ENCODE measurements at regions of chr1 and their contacts with region 1.

Region 1: DNA sequence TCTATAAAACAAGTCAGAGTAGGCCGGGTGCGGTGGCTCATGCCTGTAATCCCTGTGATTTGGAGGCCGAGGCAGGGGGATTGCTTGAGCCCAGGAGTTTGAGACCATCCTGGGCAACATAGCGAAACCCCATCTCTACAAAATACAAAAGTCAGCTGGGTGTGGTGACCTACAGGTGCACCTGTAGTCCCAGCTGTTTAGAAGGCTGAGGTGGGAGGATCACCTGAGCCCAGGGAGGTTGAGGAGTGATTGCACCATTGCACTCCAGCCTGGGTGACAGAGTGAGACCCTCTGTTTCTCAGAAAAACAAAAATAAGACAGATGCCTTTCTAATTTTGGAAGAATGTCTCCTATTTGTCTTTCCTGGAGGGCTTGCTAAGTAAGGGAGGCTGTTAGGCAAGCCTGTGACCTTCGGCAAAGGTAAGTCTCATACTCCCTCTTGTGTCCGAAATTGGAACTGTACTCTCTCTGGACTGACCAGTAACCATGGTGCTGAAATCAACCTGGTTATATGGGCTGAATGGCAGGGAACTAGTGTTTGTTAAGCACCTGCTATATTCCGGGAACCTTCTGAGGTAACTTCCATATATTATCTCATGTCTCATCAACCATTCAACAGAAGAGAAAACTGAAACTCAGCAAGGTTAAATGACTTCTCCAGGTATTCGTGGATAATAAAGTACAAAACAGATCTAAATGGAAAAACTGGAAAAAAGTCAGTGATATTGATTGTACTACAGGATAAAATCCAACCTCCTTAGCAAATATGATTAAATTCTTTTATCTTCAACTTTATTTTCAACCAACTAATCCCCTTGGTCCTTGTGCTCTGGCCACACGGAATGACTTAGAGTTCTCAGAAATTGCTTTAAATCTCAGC is 11.8 kb upstream of the RAB3B start:
- DNase-seq: peak; percentile 75
- H3K4me3 ChIP-seq: no peak overlapping the region
- H3K27ac ChIP-seq: no peak overlapping the region
- H3K4me1 ChIP-seq: peaks cover 11% of the 10 kb centered on the region
- H3K27me3 ChIP-seq: no peaks in the 10 kb centered on the region
- CTCF ChIP-seq: peak; percentile 92 to 97

Region 2: DNA sequence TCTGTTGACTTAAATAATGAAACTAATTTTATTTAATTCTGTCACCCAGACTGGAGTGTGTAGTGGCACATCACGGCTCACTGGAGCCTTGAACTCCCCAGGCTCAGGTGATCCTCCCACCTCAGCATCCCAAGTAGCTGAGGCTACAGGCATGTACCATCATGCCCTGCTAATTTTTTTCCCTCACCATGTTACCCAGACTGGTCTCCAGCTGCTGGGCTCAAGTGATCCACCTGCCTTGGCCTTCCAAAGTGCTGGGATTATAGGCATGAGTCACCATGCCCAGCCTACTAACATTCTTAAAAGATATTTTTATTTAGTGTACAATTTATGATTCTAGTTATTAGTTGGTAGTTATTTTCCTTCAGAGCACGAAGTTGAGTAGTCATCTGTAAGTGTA is 173.2 kb before region 1 on chr1:
- CTCF ChIA-PET with region 1: no interaction called
- dilution Hi-C with region 1: no loop called
- in situ Hi-C with region 1: no loop called
- intact Hi-C with region 1: loop called (anchors 1 kb)
- DNase-seq: peak; percentile 82
- H3K4me3 ChIP-seq: no peak overlapping the region
- H3K27ac ChIP-seq: no peak overlapping the region
- H3K4me1 ChIP-seq: peaks cover 10% of the 10 kb centered on the region
- H3K27me3 ChIP-seq: no peaks in the 10 kb centered on the region
- CTCF ChIP-seq: no peak

Region 3: GRCh38 chr1:51897699-51898031 is 104.6 kb before region 1 on chr1:
- CTCF ChIA-PET with region 1: no interaction called
- dilution Hi-C with region 1: no loop called
- in situ Hi-C with region 1: loop called in 1 of 2 experiments (anchors 5 kb)
- intact Hi-C with region 1: loop called (anchors 1 kb)
- DNase-seq: peak; percentile 81
- H3K4me3 ChIP-seq: no peak overlapping the region
- H3K27ac ChIP-seq: peak overlapping the region; percentile 71
- H3K4me1 ChIP-seq: peaks cover 27% of the 10 kb centered on the region
- H3K27me3 ChIP-seq: no peaks in the 10 kb centered on the region
- CTCF ChIP-seq: no peak

Region 4: DNA sequence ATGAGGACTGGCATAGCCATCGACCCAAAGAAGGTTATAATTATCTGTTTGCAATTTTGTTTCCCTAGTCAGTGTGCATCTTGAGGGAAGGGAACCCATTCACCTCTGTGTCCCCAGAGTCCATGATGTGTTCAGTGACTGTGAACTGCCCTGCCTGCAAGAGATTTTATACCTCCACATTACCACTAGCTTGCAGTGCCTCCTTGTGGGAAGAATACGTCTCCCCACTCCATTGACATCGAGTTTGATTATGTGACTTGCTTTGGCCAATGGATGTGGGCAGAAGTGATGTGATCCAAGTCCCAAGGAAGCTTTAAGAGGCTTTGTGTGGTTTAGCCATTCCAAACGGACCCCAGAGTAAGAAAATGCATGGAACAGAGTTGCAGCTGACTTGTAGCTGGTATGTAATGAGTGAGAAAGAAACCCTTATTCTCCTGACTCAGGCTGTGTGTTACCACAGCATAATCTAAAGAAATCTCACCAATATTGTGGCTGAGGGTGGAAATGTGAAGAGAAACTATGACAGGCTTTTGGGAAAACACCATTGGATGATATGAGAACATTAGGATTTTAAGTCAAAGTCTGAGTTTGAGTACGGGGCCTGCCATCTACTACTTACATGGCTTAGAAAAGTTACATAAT is 76.0 kb before region 1 on chr1:
- CTCF ChIA-PET with region 1: no interaction called
- dilution Hi-C with region 1: no loop called
- in situ Hi-C with region 1: no loop called
- intact Hi-C with region 1: loop called (anchors 1 kb)
- DNase-seq: peak; percentile 35
- H3K4me3 ChIP-seq: no peak overlapping the region
- H3K27ac ChIP-seq: no peak overlapping the region
- H3K4me1 ChIP-seq: peaks cover 8% of the 10 kb centered on the region
- H3K27me3 ChIP-seq: no peaks in the 10 kb centered on the region
- CTCF ChIP-seq: peak; percentile 49 to 54

Region 5: GRCh38 chr1:51969038-51969705 is 33.1 kb before region 1 on chr1:
- CTCF ChIA-PET with region 1: no interaction called
- dilution Hi-C with region 1: no loop called
- in situ Hi-C with region 1: no loop called
- intact Hi-C with region 1: no loop called
- DNase-seq: no peak
- H3K4me3 ChIP-seq: no peak overlapping the region
- H3K27ac ChIP-seq: no peak overlapping the region
- H3K4me1 ChIP-seq: no peaks in the 10 kb centered on the region
- H3K27me3 ChIP-seq: no peaks in the 10 kb centered on the region
- CTCF ChIP-seq: no peak